CD14-positive monocyte (primary cell): ENCODE measurements at regions of chr1 and their contacts with region 1.

Region 1: GRCh38 chr1:114152508-114153260 is 985 bp downstream of the SYT6 start:
- DNase-seq: peak; percentile 41 to 46 (median 41)
- H3K4me3 ChIP-seq: peak overlapping the region; percentile 29 to 73 (median 33)
- H3K4me3 Mint-ChIP-seq: peak overlapping the region; percentile 71 to 90
- H3K27ac ChIP-seq: no peak overlapping the region
- H3K27ac Mint-ChIP-seq: peak overlapping the region in 1 of 7 donors; percentile 40
- H3K4me1 ChIP-seq: peaks cover 27 to 32% of the 10 kb centered on the region in 2 donors
- H3K4me1 Mint-ChIP-seq: peaks cover 33% of the 10 kb centered on the region
- H3K27me3 ChIP-seq: peaks cover 56 to 62% of the 10 kb centered on the region in 2 donors
- H3K27me3 Mint-ChIP-seq: peaks cover 74 to 78% (median 76%) of the 10 kb centered on the region in 3 donors
- CTCF ChIP-seq: no peak

Region 2: GRCh38 chr1:114192329-114192728 is 39.6 kb after region 1 on chr1:
- intact Hi-C with region 1: no loop called
- DNase-seq: no peak
- H3K4me3 ChIP-seq: no peak overlapping the region
- H3K4me3 Mint-ChIP-seq: no peak overlapping the region
- H3K27ac ChIP-seq: no peak overlapping the region
- H3K27ac Mint-ChIP-seq: no peak overlapping the region
- H3K4me1 ChIP-seq: no peaks in the 10 kb centered on the region
- H3K4me1 Mint-ChIP-seq: peaks cover 6% of the 10 kb centered on the region
- H3K27me3 ChIP-seq: peaks cover 6 to 11% of the 10 kb centered on the region in 2 donors
- H3K27me3 Mint-ChIP-seq: peaks cover 15 to 34% (median 27%) of the 10 kb centered on the region in 3 donors
- CTCF ChIP-seq: no peak

Region 3: DNA sequence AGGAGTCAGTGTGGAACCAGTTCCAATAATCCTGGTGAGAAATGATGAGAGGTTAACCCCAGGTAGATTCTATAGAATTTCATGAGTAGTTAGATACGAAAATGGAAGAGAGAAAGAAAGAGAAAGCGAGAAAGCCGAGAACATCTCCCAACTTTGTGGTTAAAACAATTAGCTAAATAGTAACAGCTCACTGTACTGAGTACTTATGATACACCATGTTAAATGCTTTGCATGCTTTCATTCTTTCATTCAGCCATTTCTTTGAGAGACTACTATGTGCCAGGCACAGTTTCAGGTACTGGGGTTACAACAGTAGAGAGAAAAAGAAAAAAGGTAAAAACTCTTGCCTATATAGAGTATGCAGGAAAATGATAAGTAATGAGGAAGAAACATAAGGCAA is 110.7 kb after region 1 on chr1:
- intact Hi-C with region 1: loop called in 1 of 2 experiments (anchors 10 kb)
- DNase-seq: no peak
- H3K4me3 ChIP-seq: no peak overlapping the region
- H3K4me3 Mint-ChIP-seq: no peak overlapping the region
- H3K27ac ChIP-seq: no peak overlapping the region
- H3K27ac Mint-ChIP-seq: no peak overlapping the region
- H3K4me1 ChIP-seq: no peaks in the 10 kb centered on the region
- H3K4me1 Mint-ChIP-seq: no peaks in the 10 kb centered on the region
- H3K27me3 ChIP-seq: peaks cover 14 to 19% of the 10 kb centered on the region in 2 donors
- H3K27me3 Mint-ChIP-seq: peaks cover 10 to 22% (median 13%) of the 10 kb centered on the region in 3 donors
- CTCF ChIP-seq: no peak